Pancreas (tissue), 10 donors: ENCODE measurements at regions of chr1 and their contacts with region 1.

Region 1: GRCh38 chr1:64268653-64269557 is 65.5 kb downstream of the UBE2U start:
- DNase-seq: peak in 5 of 6 donors; percentile 49 to 76 (median 58)
- ATAC-seq: peak; percentile 84 to 96 (median 94)
- H3K4me3 ChIP-seq: peak overlapping the region in 1 of 4 donors; percentile 10
- H3K27ac ChIP-seq: no peak overlapping the region
- H3K4me1 ChIP-seq: no peaks in the 10 kb centered on the region
- H3K27me3 ChIP-seq: no peaks in the 10 kb centered on the region
- CTCF ChIP-seq: peak; percentile 48 to 74 (median 61)

Region 2: GRCh38 chr1:64675718-64676345 is 406.9 kb after region 1 on chr1:
- intact Hi-C with region 1: loop called in 2 of 3 experiments (anchors 5 to 10 kb)
- DNase-seq: no peak
- ATAC-seq: peak in 3 of 4 donors; percentile 62 to 76 (median 66)
- H3K4me3 ChIP-seq: no peak overlapping the region
- H3K27ac ChIP-seq: no peak overlapping the region
- H3K4me1 ChIP-seq: no peaks in the 10 kb centered on the region
- H3K27me3 ChIP-seq: no peaks in the 10 kb centered on the region
- CTCF ChIP-seq: peak; percentile 48 to 73 (median 60)

Region 3: GRCh38 chr1:64823691-64824476 is 555.0 kb after region 1 on chr1:
- intact Hi-C with region 1: loop called in 1 of 3 experiments (anchors 10 kb)
- DNase-seq: peak in 4 of 6 donors; percentile 42 to 71 (median 56)
- ATAC-seq: peak; percentile 88 to 97 (median 94)
- H3K4me3 ChIP-seq: no peak overlapping the region
- H3K27ac ChIP-seq: no peak overlapping the region
- H3K4me1 ChIP-seq: no peaks in the 10 kb centered on the region
- H3K27me3 ChIP-seq: no peaks in the 10 kb centered on the region
- CTCF ChIP-seq: peak; percentile 57 to 82 (median 74)

Region 4: DNA sequence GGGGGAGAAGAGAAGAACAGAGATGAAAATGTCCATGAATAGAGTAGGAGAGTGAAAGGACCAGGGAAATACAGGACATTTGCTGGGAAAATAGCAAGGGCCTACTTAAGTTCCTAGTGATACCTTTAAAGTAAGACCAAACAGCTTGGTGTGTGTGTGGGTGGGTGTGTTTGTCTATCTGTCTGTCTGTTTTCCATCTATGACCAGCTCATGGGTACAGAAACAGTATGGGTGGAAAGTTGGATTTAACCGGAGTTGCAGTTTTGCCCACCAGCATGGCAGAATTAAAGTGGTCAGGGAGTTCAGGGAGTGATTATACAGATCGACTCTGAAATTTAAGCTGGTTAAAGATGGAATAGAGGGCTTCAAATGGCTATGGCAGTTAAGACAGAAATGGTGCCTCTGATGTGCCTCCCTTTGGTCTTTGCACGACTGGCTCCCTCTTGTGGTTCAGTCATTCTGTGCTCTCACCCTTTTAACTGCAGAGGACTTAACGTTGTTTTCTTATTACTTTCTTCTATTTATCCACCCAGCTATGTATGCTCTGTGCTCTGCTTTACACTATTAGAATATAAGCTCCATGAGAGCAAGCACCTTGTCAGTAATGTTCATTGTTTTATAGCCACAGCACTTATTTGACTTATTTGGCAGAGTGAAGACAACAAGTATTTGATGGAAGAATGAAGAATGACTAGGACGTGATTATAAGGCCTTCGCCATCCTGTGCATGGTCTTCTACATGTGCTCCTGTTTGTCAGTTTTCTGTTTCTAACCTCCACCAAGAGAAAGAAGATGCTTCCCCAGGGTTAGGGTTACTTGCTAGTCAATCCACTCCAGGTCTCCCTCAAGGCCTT is 806.4 kb after region 1 on chr1:
- intact Hi-C with region 1: no loop called
- DNase-seq: peak in 3 of 6 donors; percentile 43 to 61 (median 54)
- ATAC-seq: peak; percentile 80 to 98 (median 94)
- H3K4me3 ChIP-seq: no peak overlapping the region
- H3K27ac ChIP-seq: no peak overlapping the region
- H3K4me1 ChIP-seq: no peaks in the 10 kb centered on the region
- H3K27me3 ChIP-seq: no peaks in the 10 kb centered on the region
- CTCF ChIP-seq: peak; percentile 45 to 60 (median 54)